WTC11 (cell line): ENCODE measurements at regions of chr5 and their contacts with region 1.

Region 1: GRCh38 chr5:148820461-148821395 is 5.7 kb upstream of the ADRB2 start:
- DNase-seq: no peak
- ATAC-seq: peak; percentile 66
- H3K4me3 Mint-ChIP-seq: no peak overlapping the region
- H3K27ac Mint-ChIP-seq: no peak overlapping the region
- H3K4me1 Mint-ChIP-seq: peaks cover 29% of the 10 kb centered on the region
- H3K27me3 Mint-ChIP-seq: peaks cover 14% of the 10 kb centered on the region
- CTCF ChIP-seq: no peak

Region 2: GRCh38 chr5:148697180-148697808 is 123.4 kb before region 1 on chr5:
- CTCF ChIA-PET with region 1: no interaction called
- POLR2A ChIA-PET with region 1: no interaction called
- DNase-seq: no peak
- ATAC-seq: no peak
- H3K4me3 Mint-ChIP-seq: no peak overlapping the region
- H3K27ac Mint-ChIP-seq: no peak overlapping the region
- H3K4me1 Mint-ChIP-seq: peaks cover 2% of the 10 kb centered on the region; the same call in 1 of the 2 replicates
- H3K27me3 Mint-ChIP-seq: no peaks in the 10 kb centered on the region; the same call in 1 of the 2 replicates
- CTCF ChIP-seq: no peak

Region 3: DNA sequence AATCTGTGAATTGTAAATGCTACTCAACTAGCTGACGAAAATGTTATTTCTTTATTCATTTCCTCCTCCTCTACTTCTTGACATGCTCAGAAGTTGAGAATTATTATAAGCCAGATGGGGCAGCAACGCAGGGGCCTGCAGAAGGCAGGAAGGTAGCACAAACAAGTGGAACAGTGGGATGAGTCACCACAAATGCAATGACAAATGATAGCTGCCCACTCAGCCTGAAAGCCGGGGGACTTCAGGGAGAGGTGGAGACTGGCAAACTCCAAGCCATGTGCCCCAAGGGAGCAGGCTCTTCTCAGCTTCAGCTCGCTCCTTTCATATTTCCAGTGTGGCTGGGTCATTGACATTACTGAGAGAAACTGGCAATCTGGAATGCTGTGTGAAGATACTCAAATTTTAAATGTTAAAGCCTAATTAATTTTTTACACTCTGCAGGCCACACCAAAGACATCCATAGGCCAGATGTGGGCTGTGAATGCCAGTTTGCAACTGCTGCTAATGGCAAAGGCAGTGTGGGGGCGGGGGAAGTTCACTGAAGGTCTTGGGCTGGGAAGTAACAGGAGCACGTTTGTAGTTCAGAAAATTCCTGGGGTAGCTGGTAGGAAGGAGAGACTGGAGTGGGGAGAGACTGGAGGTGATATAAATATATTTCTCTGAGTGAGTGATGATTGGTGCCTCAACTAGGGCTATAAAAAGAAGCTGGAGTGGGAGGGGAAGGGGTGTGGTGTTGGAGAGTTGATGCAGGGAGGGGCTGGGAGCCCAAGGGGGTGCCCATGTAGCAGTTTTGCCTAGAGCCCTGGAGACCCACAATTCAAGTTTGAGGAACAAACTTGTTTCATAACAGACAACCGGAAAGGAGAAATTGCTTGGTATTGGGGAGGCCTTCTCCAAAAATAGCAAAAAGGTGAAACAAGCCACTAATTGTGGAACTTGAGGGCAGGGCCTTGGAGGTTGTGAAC is 15.1 kb before region 1 on chr5:
- CTCF ChIA-PET with region 1: interaction called, 14 read pairs
- POLR2A ChIA-PET with region 1: no interaction called
- DNase-seq: no peak
- ATAC-seq: no peak
- H3K4me3 Mint-ChIP-seq: no peak overlapping the region
- H3K27ac Mint-ChIP-seq: no peak overlapping the region
- H3K4me1 Mint-ChIP-seq: peaks cover 19% of the 10 kb centered on the region
- H3K27me3 Mint-ChIP-seq: no peaks in the 10 kb centered on the region
- CTCF ChIP-seq: no peak

Region 4: DNA sequence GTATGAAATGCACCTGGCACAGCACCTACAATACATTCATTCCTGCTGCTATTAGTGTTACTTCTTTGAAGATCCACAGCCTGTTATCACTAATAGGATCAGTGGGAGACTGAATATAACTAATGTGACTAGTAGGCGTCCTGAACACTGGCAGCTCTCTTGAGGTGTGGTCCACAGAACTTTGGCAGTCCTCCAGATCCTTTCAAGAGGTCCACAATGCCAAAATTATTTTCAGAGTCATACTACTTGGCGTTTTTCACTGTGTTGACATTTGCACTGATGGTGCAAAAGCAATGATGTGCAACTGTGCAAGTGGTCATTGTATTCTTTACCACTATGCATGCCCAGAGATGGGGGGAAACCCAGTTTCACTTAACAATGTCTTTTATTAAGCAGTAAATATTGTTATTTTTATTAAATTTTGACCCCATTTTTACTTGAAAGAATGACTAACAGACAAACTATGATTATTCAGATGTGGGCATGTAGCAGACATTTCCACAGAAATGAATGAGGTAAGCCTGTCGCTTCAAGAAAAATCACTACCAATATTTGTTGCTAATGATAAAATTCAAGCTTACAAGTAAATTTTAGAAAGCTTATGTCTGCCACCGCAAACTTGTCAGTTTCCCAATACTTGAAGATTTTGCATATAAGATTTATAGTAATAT is 54.6 kb after region 1 on chr5:
- CTCF ChIA-PET with region 1: no interaction called
- POLR2A ChIA-PET with region 1: no interaction called
- DNase-seq: no peak
- ATAC-seq: no peak
- H3K4me3 Mint-ChIP-seq: no peak overlapping the region
- H3K27ac Mint-ChIP-seq: no peak overlapping the region
- H3K4me1 Mint-ChIP-seq: peaks cover 19% of the 10 kb centered on the region
- H3K27me3 Mint-ChIP-seq: no peaks in the 10 kb centered on the region
- CTCF ChIP-seq: no peak